ENCODE measurements at regions of chr16 and their contacts with region 1.

Region 1: GRCh38 chr16:30445408-30446202 is at the start of gene SEPHS2:
- DNase-seq: peak; percentile 92 to 98
- ATAC-seq: peak; percentile 94 to 95
- H3K4me3 ChIP-seq: peak within 1 kb of the TSS; percentile 84
- H3K27ac ChIP-seq: peak within 1 kb of the TSS; percentile 91 to 99
- H3K4me1 ChIP-seq: peaks cover 19% of the 10 kb centered on the region
- CTCF ChIP-seq: peak; percentile 40
- EP300 ChIP-seq: no peak
- POLR2A ChIP-seq: peak; percentile 79
- RAD21 ChIP-seq: peak in 1 of 2 experiments; percentile 18; a peak in 1 of 5 replicates
- polyA plus RNA-seq, gene SEPHS2: 61.5 and 72.6 TPM in 2 replicates

Region 2: DNA sequence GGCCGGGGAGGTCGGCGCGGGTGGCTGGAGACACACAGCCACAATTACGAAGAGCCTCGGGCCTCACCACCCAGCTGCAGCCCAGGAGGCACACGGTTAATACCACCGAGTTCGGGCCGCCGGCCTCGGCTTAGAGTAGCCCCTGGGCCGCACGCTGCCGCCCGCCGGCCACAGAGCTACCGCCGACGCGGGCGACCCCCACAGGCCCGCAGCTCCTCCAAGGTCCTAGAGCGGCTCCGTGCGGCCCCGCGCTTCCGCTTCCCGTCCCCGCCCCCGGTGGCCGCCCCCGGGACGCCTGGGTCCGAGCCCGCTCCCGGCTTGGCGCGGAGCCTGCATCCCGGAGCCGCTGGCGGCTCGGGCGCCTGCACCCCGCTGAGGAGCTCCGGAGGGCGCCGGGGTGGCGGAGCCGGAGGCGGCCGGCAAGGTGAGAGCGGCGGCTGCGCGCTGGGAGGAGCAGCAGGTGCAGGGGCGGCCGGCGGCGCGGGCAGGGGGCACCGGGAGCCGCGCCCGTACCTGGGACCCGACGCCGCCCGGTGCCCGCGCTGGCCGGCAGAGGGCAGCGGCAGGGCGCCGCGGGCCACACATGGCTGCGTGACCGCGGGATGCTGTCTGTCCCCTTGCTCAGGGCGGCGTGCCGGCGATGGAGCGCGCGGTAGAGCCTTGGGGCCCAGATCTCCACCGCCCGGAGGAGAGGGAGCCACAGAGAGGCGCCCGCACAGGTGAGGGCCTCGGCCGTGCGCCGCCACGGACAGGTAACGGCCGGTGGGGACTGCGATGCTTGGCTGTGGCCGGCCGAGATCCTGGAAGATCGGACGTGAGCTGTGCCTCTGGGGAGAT is 50.2 kb before region 1 on chr16 and contains the start of gene ZNF48:
- CTCF ChIA-PET with region 1: no interaction called
- POLR2A ChIA-PET with region 1: no interaction called
- DNase-seq: peak; percentile 59 to 88
- ATAC-seq: peak; percentile 82 to 88
- H3K4me3 ChIP-seq: peak within 1 kb of the TSS; percentile 86
- H3K27ac ChIP-seq: peak within 1 kb of the TSS; percentile 95 to 98
- H3K4me1 ChIP-seq: peaks cover 12% of the 10 kb centered on the region
- CTCF ChIP-seq: peak; percentile 65
- EP300 ChIP-seq: no peak
- POLR2A ChIP-seq: peak; percentile 52
- RAD21 ChIP-seq: peak; percentile 4 to 36; a peak in 2 of 5 replicates
- polyA plus RNA-seq, gene ZNF48: 7.0 and 9.3 TPM in 2 replicates

Region 3: GRCh38 chr16:30509081-30509765 is 63.6 kb after region 1 on chr16:
- CTCF ChIA-PET with region 1: interaction called, 14 read pairs
- POLR2A ChIA-PET with region 1: no interaction called
- DNase-seq: no peak
- ATAC-seq: no peak
- H3K4me3 ChIP-seq: no peak overlapping the region
- H3K27ac ChIP-seq: no peak overlapping the region
- H3K4me1 ChIP-seq: no peaks in the 10 kb centered on the region
- CTCF ChIP-seq: no peak
- EP300 ChIP-seq: no peak
- POLR2A ChIP-seq: no peak
- RAD21 ChIP-seq: no peak

Region 4: DNA sequence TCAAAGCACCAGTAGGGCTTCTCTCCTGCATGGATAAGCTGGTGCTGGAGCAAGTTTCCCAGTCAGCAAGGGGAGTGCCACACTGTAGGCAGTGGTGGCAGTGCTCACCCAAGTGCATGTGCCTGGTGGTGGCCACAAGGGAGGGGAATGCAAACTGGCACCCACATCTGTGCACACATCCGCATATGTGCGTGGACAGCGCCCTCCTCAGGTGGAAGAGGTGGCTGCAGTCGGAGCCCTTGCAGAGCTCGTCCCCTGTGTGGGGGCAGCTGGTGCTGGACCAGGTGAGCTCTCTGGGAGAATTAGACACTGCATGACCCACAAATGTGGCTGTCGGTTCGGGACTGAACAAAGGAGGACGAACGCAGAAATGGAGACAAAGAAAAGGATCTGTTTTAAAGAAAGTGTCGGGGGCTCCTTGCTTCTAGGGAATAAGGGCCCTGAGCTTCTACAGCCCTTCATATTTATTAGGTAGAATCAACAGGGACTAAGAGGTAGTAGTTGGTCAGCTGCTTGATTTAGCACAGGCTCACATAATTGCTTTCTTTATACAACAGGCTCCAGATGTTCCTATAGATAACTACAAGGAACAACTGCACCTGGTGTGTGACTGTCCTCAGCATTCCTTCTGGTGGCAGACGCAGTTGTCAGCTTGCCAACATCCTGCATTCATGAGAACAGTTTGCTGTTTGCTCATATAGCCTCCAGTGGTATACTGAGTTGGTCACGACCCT is 169.9 kb after region 1 on chr16:
- CTCF ChIA-PET with region 1: interaction called, 20 read pairs
- POLR2A ChIA-PET with region 1: interaction called, 5 read pairs
- DNase-seq: peak; percentile 80 to 84
- ATAC-seq: peak; percentile 92 to 94
- H3K4me3 ChIP-seq: no peak overlapping the region
- H3K27ac ChIP-seq: no peak overlapping the region
- H3K4me1 ChIP-seq: peaks cover 16% of the 10 kb centered on the region; the same call in 2 of the 3 replicates
- CTCF ChIP-seq: peak; percentile 73
- EP300 ChIP-seq: no peak
- POLR2A ChIP-seq: no peak
- RAD21 ChIP-seq: peak; percentile 80 to 90

Region 5: DNA sequence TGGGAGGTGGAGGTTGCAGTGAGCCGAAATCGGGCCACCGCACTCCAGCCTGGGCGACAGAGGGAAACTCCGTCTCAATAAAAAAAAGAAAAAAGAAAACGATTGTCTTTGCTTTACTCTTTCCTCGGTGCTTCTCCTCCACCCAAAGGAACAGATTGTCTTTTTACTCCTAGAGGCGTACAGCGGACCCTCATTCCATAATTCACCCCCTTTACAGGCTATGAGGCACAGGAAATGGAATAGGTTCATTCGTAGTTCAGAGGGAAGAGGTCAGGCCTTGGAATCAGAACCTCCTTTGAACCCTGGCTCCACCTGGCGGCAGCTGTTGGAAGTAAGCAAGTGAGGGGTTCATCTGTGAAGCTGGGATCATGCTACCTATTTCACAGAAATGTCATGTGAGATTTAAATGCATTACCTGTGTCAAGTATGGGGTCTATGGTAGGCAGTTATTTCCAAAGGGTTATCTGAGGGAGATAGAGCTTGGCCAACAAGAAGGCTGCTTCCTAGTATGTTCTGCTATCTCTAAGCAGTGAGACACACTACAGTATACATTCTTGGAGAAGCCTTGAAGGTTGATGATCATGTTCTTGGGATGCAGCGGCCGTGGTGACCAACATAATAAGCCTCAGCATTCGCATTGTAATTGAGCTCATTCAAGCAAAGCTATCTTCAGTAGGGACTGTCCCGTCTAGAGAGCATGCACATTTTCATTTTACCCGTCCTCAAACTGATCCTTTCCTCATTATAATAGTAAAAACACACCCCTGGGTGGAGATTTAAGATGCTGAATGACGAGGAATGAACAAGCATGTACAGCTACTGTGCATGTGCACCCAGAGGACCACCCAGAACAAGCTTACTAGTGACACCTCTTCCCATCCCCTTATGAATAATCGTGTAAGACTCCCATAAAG is 183.3 kb after region 1 on chr16:
- CTCF ChIA-PET with region 1: interaction called, 24 read pairs
- POLR2A ChIA-PET with region 1: interaction called, 3 read pairs
- DNase-seq: peak; percentile 73 to 86
- ATAC-seq: peak; percentile 95 to 99
- H3K4me3 ChIP-seq: peak overlapping the region; percentile 34
- H3K27ac ChIP-seq: peak overlapping the region; percentile 58 to 78
- H3K4me1 ChIP-seq: no peaks in the 10 kb centered on the region
- CTCF ChIP-seq: peak; percentile 87
- EP300 ChIP-seq: no peak
- POLR2A ChIP-seq: no peak
- RAD21 ChIP-seq: peak; percentile 81

Region 6: GRCh38 chr16:30941600-30942425 is 496.2 kb after region 1 on chr16:
- CTCF ChIA-PET with region 1: no interaction called
- POLR2A ChIA-PET with region 1: no interaction called
- DNase-seq: peak; percentile 77 to 87
- ATAC-seq: peak; percentile 89 to 96
- H3K4me3 ChIP-seq: no peak overlapping the region
- H3K27ac ChIP-seq: peak overlapping the region; percentile 39 to 73; a peak in 4 of 6 replicates
- H3K4me1 ChIP-seq: peaks cover 19% of the 10 kb centered on the region
- CTCF ChIP-seq: peak; percentile 75
- EP300 ChIP-seq: no peak
- POLR2A ChIP-seq: no peak
- RAD21 ChIP-seq: peak; percentile 77 to 80